ENCODE measurements at regions of chr10 and their contacts with region 1.

Region 1: DNA sequence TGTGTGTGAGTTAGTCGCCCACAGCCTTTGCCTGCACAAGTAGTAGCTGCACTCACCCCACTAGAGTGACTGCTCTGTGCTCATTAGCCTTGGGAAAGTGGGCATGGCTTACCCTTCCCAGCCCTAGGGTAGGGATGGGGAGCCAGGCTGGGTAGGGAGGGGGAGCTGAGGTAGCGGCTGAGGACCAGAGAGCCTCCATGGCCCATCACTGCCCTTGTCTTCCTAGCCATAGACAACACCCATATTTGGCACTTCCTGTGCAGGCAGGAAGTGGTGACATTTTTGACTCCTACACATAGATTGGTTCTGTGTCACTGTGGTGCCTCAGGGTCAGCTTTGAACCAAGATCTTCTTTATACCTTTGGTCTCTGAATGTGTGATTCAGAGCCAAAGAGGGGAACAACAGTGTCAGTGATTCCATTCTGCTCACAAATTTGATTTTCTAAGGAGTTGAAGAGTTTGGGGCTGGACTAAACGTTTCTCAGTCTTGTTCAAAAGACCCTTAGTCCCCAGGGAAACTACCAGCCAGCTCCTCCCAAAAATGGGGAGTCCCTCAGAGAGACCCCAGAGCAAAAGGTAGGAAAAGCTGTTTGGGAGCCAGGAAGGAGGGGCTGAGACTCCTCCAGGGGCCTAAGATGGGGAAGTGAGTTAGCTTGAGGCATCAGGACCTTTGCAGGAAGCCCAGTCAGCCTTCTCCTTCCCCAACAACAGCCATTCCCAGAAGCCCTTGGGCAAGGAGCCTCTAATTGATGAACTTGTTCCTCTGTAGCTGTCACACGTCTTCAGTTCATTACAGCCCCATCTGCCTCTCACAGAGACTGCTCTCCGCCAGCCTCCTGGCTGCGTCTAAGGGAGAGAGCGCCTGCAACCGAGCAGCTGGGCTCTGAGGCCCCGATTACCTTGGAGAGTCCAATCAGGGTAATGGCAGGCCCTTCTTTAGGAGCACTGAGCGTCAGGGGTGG is 135.0 kb downstream of the CDH23 start:
- DNase-seq: no peak

Region 2: DNA sequence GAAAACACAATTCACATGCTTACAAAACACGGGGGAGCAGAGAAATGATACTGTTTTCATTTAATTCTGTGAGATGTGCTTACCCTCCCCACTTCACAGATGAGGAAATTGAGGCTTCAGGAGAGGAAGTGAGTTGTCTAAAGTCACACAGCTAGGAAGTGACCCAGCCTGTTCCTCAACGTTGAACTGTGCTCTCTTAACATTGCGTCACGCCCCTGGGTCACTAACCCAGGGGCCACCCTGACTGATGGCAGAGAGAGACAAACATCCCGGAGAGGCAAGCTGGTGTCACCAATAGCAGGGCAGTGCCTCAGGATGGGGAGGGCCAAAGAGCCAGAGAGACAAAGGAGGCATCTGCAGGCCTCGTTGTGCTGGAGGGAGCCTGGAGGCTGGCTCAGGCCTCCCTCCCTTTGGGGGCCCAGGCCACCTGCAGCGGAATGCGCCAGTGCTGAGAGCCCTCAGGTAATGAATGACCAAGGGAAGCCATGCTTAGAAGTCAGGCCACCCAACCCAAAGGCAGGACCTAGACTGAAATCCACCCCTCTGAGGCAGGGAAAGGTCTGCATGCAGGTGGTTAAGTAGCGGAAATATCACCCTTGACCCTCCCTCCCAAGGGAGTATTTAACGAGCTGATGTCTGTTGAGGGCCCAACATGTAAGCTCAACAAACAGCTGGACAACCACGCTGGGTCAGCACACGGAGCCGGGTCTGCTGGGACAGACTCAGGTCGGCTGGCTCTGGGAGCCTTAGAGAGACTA is 106.5 kb after region 1 on chr10:
- intact Hi-C with region 1: loop called (anchors 10 kb)
- DNase-seq: peak; percentile 90

Region 3: DNA sequence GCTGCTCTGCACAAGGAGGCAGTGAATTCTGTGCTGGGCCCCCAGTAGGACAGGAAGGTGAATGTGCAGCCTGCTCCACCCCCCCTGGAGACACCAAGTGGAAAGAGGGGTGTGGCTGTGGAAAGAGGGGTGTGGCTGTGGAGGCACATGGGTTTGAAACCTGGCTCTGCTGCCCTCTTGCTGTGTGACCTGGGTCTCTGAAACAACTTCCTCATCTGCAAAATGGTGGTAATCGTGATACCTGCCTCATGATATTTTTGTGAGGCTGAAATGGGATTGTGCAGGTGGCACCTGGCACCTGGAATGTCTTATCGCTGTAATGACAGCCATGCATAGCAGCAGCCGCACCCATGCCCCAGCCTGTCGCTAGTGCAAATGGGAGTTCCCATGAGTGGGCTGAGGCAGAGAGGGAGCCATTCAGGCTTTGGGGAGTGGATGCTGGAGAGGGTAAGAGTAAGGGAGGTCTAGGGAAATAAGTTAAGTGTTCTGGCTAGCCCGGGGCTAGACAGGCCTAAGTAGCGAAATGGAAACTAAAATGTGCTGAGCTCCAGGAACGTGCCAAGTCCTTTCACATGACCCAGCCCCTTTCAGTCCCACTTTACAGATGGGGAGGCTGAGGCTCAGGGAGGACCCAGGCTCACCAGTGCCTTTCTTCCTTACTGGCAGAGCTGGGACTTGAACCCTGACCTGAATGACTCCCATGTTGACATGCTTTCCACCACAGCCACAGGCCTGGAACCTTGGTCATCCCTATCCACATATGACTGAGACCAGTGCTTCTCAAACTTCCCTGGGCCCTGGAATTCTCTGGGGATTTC is 152.8 kb after region 1 on chr10:
- intact Hi-C with region 1: no loop called
- DNase-seq: no peak

Region 4: GRCh38 chr10:71829171-71829570 is 297.4 kb after region 1 on chr10:
- intact Hi-C with region 1: no loop called
- DNase-seq: no peak

Measured in cardiac septum (tissue), 1 donor.